AG04450 (cell line): ENCODE measurements at regions of chr7 and their contacts with region 1.

Region 1: GRCh38 chr7:139502226-139502625 is 18.8 kb upstream of the KLRG2 start:
- DNase-seq: no peak
- H3K4me3 ChIP-seq: no peak overlapping the region
- H3K27ac ChIP-seq: no peak overlapping the region
- H3K27me3 ChIP-seq: peaks cover 5% of the 10 kb centered on the region
- CTCF ChIP-seq: no peak

Region 2: DNA sequence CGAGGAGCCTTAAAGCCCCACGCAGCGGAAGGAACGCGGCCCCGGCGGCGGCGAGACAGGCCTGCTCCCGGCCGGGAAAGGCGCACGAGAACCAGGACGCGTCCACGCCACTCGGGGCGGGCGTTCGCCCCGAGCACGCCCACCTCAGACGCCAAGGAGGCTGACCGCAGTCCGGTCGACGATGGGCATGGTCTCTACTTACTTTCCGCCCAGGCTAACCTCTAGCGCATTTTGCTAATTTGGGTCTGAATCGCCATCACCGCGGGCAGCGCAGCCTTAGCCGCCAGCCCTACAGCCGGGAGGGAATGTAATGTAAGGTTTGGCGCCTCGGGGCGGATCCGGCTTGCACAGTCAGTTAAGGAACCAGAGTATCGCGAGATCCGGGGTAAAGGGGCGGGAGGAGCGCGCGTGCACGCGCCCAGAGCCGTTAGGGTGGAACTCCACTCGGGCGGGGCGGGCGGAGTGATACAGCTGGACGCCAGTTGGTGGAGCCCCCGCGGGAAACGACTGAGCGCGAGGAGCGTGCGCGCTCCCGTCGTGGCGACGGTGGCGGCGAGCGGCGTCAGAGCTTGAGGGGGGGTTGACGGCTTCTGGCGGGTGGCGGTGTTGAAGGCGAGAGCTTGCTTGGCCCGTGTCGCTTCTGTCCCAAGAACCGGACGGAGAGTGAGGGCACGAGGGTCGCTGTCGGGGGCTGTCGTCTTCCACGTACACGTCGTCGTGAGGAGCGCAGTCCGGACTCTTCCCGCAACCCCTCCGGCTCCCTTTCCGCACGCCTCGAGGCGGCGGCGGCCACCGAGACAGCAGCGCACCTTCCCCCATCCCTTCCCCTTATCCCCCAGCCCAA is 142.6 kb before region 1 on chr7 and contains the start of gene LUC7L2:
- CTCF ChIA-PET with region 1: no interaction called
- POLR2A ChIA-PET with region 1: no interaction called
- DNase-seq: peak; percentile 95
- H3K4me3 ChIP-seq: peak within 1 kb of the TSS; percentile 99
- H3K27ac ChIP-seq: peak within 1 kb of the TSS; percentile 99
- H3K27me3 ChIP-seq: no peaks in the 10 kb centered on the region
- CTCF ChIP-seq: no peak
- polyA plus RNA-seq, gene LUC7L2: 31.2 and 45.7 TPM in 2 replicates

Region 3: DNA sequence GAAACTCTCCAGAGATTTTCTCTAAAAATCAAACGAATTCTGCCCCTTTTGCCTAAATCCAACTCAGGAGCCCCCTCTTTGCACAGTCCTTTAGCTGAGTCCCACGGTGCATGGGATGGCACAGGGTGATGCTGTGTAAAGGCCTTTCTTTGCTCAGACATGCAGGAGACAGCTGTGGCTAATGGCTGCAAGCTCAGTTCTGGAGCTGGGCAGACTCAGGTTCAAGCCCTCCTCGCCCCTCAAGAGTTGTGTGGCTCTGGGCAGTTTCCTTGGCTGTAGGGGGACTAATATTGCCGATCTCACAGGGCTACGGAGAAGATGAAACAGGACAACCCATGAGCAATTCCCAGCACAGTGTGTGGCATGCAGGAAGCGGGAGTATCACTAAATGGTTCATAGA is 63.8 kb after region 1 on chr7:
- CTCF ChIA-PET with region 1: interaction called, 15 read pairs
- POLR2A ChIA-PET with region 1: no interaction called
- DNase-seq: no peak
- H3K4me3 ChIP-seq: no peak overlapping the region
- H3K27ac ChIP-seq: no peak overlapping the region
- H3K27me3 ChIP-seq: no peaks in the 10 kb centered on the region
- CTCF ChIP-seq: no peak

Region 4: DNA sequence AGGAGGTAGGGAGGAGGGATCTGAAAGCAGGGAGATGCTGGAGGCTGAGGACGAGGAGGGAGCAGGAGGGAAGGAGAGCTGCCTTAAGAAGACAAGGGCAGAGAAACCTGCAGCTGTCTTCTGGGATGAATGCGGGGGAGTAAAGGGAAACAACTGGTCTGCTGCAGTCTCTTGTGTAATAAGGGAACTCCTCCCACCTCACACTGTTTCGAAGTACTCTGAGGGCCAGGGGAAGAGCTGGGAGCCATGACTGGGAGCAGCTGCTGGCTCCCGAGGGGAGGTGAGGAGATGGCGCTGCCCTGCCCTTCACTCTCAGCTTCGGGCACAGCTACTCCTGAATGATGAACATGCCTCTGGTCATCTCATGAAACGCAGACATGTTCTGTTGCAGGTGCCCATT is 86.4 kb after region 1 on chr7:
- CTCF ChIA-PET with region 1: interaction called, 18 read pairs
- POLR2A ChIA-PET with region 1: no interaction called
- DNase-seq: peak; percentile 72
- H3K4me3 ChIP-seq: no peak overlapping the region
- H3K27ac ChIP-seq: peak overlapping the region; percentile 61
- H3K27me3 ChIP-seq: no peaks in the 10 kb centered on the region
- CTCF ChIP-seq: no peak

Region 5: DNA sequence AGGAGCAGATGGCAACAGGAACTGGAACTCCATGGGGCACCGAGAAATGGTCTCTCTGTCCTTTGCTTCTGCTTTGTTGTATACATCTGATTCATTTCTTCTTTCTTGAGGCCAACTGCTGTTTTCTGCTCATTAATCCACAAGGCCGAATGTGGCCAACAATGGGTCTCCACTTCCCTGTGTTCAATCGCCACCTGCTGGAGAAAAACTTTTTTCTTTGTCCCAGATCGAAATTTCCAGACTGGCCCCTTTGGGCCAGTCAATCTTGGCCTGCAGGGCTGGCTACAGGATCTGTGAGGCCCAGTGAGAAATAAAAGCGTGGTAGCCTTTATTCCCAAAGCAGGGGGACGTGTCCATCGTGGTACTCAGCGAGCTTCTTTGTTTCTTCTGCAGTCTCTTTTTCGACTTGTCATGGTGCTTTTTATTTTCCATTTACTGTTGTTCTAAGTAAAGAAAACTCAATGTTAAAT is 501.7 kb after region 1 on chr7:
- CTCF ChIA-PET with region 1: interaction called, 32 read pairs
- POLR2A ChIA-PET with region 1: no interaction called
- DNase-seq: peak; percentile 56
- H3K4me3 ChIP-seq: no peak overlapping the region
- H3K27ac ChIP-seq: no peak overlapping the region
- H3K27me3 ChIP-seq: no peaks in the 10 kb centered on the region
- CTCF ChIP-seq: peak; percentile 71